CD4-positive, alpha-beta memory T cell (primary cell): ENCODE measurements at regions of chr3 and their contacts with region 1.

Region 1: DNA sequence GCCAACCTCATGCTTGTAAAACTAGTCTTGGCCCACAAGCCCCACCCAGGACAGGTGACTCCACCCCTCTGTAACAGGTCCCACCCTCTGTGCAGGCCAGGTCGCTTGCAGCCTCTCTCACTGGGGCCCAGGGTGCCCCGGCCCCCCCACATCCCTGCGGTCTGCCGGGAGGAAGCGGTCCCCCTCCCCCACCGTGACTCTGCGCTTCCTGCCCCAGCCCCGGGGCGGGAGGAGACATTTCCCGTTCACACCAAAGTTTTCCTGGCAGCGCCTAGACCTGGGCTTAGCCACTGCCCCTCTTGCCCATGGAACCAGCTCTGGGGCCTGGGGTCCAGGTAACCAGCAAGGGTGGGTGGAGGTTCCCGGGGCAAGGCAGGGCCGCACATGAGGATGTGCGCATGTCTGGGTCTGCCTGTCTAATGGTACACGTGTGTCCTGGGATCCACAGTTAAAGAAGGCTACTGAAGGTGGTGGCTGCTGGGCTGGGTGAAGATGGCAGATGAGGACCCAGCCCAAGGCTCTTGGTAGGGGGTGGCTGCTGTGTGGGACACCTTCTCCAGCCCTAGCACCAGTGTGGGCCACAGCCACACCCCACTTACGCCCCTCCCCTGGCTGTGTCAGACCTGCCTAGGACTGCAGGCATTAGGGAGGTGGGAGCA is 8.4 kb downstream of the NBEAL2 start:
- DNase-seq: peak; percentile 91 to 94 (median 94)
- H3K4me3 ChIP-seq: peak overlapping the region; percentile 57 to 66
- H3K4me3 Mint-ChIP-seq: peak overlapping the region; percentile 83 to 91 (median 86)
- H3K27ac ChIP-seq: peak overlapping the region; percentile 76
- H3K27ac Mint-ChIP-seq: peak overlapping the region; percentile 86 to 98 (median 96)
- H3K4me1 ChIP-seq: peaks cover 86% of the 10 kb centered on the region
- H3K4me1 Mint-ChIP-seq: peaks cover 53 to 90% (median 76%) of the 10 kb centered on the region in 4 donors
- H3K27me3 ChIP-seq: no peaks in the 10 kb centered on the region
- H3K27me3 Mint-ChIP-seq: no peaks in the 10 kb centered on the region

Region 2: DNA sequence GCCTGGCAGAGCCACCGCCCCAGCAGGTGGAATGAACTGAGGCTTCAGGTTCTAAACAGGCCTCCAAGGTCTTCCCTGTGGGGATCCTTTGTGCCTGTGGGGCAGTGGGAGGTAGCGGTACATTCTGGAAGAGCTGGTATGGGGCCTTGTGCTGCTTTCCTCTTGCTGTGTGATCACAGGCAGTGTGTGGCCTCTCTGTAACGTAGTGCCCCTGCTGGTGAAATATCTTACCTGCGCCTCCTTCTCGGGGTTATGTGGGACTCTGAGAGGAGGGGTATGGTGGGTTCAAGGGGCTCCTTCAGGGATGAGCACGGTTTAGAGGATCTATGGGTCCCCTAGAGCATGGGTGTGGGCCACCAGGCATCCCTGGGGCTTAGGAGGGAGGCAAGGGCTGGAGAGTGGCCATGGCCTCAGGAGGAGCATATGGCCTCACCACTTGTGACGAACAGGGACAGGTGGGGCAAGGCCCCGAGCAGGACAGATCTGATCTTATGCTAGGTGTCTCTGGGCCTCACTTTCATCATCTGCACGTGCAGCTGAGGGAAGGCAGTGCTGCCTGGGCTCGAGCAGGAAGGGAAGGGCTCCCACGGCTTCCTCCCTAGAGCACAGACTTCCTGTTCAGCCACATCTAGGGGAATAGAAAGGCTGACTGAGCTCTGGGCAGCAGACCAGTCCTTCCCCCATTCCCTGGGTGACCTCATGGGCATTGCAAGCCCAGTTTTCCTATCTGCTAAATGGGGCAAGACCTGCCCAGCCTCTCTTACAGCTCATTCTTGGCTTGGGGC is 292.5 kb before region 1 on chr3:
- CTCF ChIA-PET with region 1: no interaction called
- POLR2A ChIA-PET with region 1: no interaction called
- intact Hi-C with region 1: loop called (anchors 5 kb)
- DNase-seq: peak in 4 of 5 donors; percentile 43 to 49 (median 44)
- H3K4me3 ChIP-seq: peak overlapping the region in 1 of 2 donors; percentile 30
- H3K4me3 Mint-ChIP-seq: peak overlapping the region; percentile 37 to 80 (median 68)
- H3K27ac ChIP-seq: peak overlapping the region; percentile 39
- H3K27ac Mint-ChIP-seq: peak overlapping the region; percentile 74 to 93 (median 90)
- H3K4me1 ChIP-seq: peaks cover 64% of the 10 kb centered on the region
- H3K4me1 Mint-ChIP-seq: peaks cover 33 to 81% (median 59%) of the 10 kb centered on the region in 4 donors
- H3K27me3 ChIP-seq: no peaks in the 10 kb centered on the region
- H3K27me3 Mint-ChIP-seq: no peaks in the 10 kb centered on the region